AG04450 (cell line): ENCODE measurements at regions of chr10 and their contacts with region 1.

Region 1: GRCh38 chr10:122298598-122299301 is 27.7 kb downstream of the BTBD16 start:
- DNase-seq: peak; percentile 58
- H3K4me3 ChIP-seq: peak overlapping the region; percentile 48
- H3K27ac ChIP-seq: no peak overlapping the region
- H3K27me3 ChIP-seq: peaks cover 18% of the 10 kb centered on the region
- CTCF ChIP-seq: peak; percentile 94

Region 2: DNA sequence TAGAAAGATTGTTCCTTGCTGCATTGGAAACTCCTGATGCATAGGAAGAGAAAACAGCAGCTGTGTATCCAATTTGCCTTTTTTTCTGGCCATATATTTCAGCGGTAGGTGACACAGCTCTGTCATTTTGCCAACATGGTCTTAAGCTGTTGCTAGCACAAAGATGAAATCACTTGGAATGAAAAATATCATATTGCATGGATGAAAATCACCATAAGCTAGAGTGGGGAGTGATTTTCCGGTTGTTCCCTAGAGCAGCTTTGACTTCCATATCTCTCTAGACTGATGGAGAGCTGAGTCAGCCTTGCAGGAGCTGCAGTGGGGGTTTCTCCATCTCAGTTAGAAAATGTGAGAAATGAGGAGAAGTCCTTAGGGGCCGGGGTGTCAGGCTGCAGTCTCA is 66.0 kb before region 1 on chr10:
- CTCF ChIA-PET with region 1: no interaction called
- POLR2A ChIA-PET with region 1: no interaction called
- DNase-seq: peak; percentile 61
- H3K4me3 ChIP-seq: no peak overlapping the region
- H3K27ac ChIP-seq: no peak overlapping the region
- H3K27me3 ChIP-seq: no peaks in the 10 kb centered on the region
- CTCF ChIP-seq: no peak

Region 3: GRCh38 chr10:122286867-122287266 is 11.9 kb before region 1 on chr10:
- CTCF ChIA-PET with region 1: interaction called, 18 read pairs
- POLR2A ChIA-PET with region 1: no interaction called
- DNase-seq: peak; percentile 48
- H3K4me3 ChIP-seq: no peak overlapping the region
- H3K27ac ChIP-seq: no peak overlapping the region
- H3K27me3 ChIP-seq: no peaks in the 10 kb centered on the region
- CTCF ChIP-seq: peak; percentile 5; the same call in 1 of the 2 replicates

Region 4: GRCh38 chr10:122441961-122442360 is 143.2 kb after region 1 on chr10:
- CTCF ChIA-PET with region 1: interaction called, 23 read pairs
- POLR2A ChIA-PET with region 1: no interaction called
- DNase-seq: no peak
- H3K4me3 ChIP-seq: no peak overlapping the region
- H3K27ac ChIP-seq: no peak overlapping the region
- H3K27me3 ChIP-seq: no peaks in the 10 kb centered on the region
- CTCF ChIP-seq: no peak

Region 5: DNA sequence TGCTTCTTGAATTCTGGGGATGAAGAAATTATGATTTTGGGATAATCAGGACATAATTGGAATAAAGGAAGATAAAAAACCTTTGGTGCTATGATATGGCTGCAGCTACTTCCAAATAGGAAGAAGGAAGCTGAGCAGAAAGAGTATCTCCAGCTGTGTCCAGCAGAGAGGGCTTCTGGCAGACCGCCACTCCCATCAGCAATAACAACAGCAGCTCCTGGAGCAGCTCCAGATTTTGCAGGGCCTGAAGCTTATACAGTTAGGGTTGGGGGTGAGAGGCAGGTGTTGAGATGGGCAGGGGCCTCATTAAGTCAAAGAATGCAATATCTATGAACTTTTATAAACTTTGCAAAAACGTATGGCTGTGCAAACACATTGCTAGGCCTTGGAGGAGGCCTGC is 338.6 kb after region 1 on chr10:
- CTCF ChIA-PET with region 1: no interaction called
- POLR2A ChIA-PET with region 1: no interaction called
- DNase-seq: no peak
- H3K4me3 ChIP-seq: no peak overlapping the region
- H3K27ac ChIP-seq: no peak overlapping the region
- H3K27me3 ChIP-seq: no peaks in the 10 kb centered on the region
- CTCF ChIP-seq: no peak

Region 6: GRCh38 chr10:122911889-122912484 is 613.2 kb after region 1 on chr10:
- CTCF ChIA-PET with region 1: no interaction called
- POLR2A ChIA-PET with region 1: no interaction called
- DNase-seq: no peak
- H3K4me3 ChIP-seq: no peak overlapping the region
- H3K27ac ChIP-seq: no peak overlapping the region
- H3K27me3 ChIP-seq: no peaks in the 10 kb centered on the region
- CTCF ChIP-seq: no peak